Activated B cell treated with CpG ODN at 0.5 μM for 24 hours (primary cell): ENCODE measurements at regions of chr7 and their contacts with region 1.

Region 1: DNA sequence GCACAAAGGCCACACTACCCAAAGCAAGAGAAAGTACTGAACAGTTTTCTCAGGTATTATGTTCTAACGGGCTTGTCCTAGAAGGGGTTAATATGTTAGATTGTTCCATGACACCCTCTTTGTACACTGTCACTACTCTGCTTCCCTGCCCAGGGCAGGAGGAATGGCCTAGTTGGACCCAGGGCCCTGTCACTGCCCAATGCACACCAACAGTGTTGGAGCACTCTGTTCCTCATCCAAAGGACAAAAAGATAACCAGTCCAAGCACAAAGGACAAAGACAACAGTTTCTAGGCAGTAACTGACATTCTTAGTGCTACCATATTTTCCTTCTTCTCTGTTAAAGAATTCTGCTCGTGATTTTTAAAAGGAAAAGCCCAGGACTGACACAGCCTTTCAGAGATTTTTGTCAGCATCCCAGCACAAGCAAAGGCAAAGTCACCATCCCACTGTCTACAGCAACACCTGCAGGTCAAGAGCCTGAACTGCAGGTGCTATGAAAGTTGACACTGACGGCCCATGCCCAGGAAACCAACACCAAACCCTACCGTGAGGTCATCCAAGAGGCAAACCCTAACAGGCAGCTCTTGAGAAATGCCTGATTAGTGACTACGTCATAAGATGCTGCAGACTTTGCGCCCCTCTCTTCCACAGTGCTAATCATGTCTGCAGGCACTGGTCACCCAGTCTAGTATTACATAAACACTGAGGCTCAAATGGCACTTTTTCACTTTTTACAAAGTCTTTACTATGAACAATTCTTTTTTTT is 13.2 kb downstream of the NUDCD3 start:
- DNase-seq: peak; percentile 37
- ATAC-seq: peak; percentile 98
- H3K4me3 Mint-ChIP-seq: no peak overlapping the region
- H3K27ac Mint-ChIP-seq: no peak overlapping the region
- H3K4me1 Mint-ChIP-seq: peaks cover 11% of the 10 kb centered on the region
- H3K27me3 Mint-ChIP-seq: no peaks in the 10 kb centered on the region
- CTCF ChIP-seq: peak; percentile 71

Region 2: DNA sequence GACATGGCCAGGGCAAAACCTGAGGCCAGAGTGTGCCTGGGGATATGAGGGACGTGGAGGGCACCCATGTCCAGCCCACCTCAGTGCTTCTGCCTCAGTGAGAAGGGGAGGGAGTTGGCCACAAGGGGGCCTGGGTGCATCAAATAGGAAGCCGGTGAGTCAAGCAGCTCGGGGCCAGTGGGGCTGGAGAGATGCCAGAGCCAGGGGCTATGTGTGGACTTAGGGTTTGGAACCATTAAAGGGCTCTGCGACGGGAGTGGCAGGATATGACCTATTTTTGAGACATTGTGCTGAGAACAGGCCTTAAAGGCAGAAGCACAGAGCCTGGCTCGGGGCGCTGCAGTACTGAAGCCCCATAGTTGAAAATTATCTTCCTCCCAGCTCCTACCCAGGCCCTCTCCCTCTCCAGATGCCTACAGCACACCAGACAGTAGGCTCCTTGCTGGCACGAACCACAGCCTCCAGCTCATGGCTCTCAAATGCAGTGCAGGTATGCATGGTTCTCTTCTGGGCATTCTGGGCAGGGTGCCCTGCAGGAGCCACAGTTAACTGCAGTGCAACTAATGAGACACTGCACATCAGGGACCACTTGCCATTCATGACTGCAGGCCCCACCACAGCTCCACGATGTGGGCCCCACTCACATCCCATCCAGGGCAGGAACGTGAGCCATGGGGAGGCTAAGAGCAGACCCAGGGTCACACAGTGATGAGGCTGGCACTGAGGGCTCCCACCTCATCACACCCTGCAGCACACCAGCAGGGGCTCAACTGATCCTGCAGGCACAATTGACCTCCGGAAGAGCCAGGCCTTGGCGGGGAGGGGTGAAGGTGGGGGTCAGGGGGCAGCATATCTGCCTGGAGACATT is 404.6 kb before region 1 on chr7:
- CTCF ChIA-PET with region 1: no interaction called
- POLR2A ChIA-PET with region 1: no interaction called
- intact Hi-C with region 1: loop called (anchors 2 kb)
- DNase-seq: no peak
- ATAC-seq: peak; percentile 22
- H3K4me3 Mint-ChIP-seq: no peak overlapping the region
- H3K27ac Mint-ChIP-seq: peak overlapping the region; percentile 90
- H3K4me1 Mint-ChIP-seq: peaks cover 84% of the 10 kb centered on the region
- H3K27me3 Mint-ChIP-seq: no peaks in the 10 kb centered on the region
- CTCF ChIP-seq: no peak

Region 3: GRCh38 chr7:44213877-44214388 is 263.3 kb before region 1 on chr7:
- CTCF ChIA-PET with region 1: no interaction called
- POLR2A ChIA-PET with region 1: no interaction called
- intact Hi-C with region 1: loop called (anchors 1 kb)
- DNase-seq: no peak
- ATAC-seq: peak; percentile 66
- H3K4me3 Mint-ChIP-seq: no peak overlapping the region
- H3K27ac Mint-ChIP-seq: peak overlapping the region; percentile 19
- H3K4me1 Mint-ChIP-seq: peaks cover 10% of the 10 kb centered on the region
- H3K27me3 Mint-ChIP-seq: no peaks in the 10 kb centered on the region
- CTCF ChIP-seq: no peak

Region 4: DNA sequence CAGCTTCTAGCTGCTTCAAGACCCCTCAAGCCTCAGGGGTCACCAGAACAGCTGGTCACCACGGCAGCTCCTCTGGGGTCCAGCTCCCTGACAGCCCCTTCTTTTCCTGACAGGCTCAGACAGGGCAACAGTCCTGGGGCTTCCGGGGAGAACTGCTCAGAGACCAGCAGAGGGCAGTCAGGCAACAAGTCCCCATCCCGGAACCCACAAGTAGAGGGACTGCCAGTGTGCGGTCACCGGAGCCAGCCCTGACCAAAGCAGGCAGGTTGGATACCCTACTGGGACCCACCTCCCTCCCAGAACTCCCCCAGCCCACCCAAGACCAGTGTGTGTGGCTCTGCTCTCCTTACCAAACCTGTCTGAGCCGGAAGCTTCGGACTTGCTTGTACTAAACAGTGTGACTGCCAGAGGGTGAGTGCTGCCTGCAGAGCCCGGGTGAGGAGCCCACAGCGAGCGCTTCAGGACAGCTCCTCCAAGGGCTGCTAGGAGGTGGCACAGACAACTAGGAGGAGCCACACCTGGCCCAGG is 236.2 kb before region 1 on chr7:
- CTCF ChIA-PET with region 1: interaction called, 7 read pairs
- POLR2A ChIA-PET with region 1: no interaction called
- intact Hi-C with region 1: loop called (anchors 1 kb)
- DNase-seq: peak; percentile 41
- ATAC-seq: peak; percentile 87
- H3K4me3 Mint-ChIP-seq: peak overlapping the region; percentile 56
- H3K27ac Mint-ChIP-seq: no peak overlapping the region
- H3K4me1 Mint-ChIP-seq: no peaks in the 10 kb centered on the region
- H3K27me3 Mint-ChIP-seq: no peaks in the 10 kb centered on the region
- CTCF ChIP-seq: no peak

Region 5: DNA sequence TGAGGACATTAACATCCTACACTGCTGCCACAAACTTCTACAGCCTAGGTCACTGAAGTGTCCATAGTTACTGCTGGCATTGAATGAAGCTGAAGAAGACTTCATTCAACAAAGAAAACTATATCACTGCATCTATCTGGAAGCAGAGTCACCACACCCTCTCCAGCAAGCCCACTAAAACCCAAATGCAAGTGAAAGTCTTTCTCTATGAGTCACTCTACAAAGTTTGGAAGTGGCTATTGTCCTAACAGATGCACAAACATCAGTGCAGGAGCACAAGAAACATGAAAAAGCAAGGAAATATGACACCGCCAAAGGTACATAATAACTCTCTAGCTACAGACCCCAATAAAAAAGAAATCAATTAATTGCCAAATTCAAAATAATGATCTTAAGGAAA is 108.4 kb before region 1 on chr7:
- CTCF ChIA-PET with region 1: no interaction called
- POLR2A ChIA-PET with region 1: no interaction called
- intact Hi-C with region 1: no loop called
- DNase-seq: no peak
- ATAC-seq: no peak
- H3K4me3 Mint-ChIP-seq: no peak overlapping the region
- H3K27ac Mint-ChIP-seq: no peak overlapping the region
- H3K4me1 Mint-ChIP-seq: no peaks in the 10 kb centered on the region
- H3K27me3 Mint-ChIP-seq: peaks cover 29% of the 10 kb centered on the region
- CTCF ChIP-seq: no peak

Region 6: GRCh38 chr7:44431091-44431608 is 46.1 kb before region 1 on chr7:
- CTCF ChIA-PET with region 1: no interaction called
- POLR2A ChIA-PET with region 1: no interaction called
- intact Hi-C with region 1: loop called (anchors 1 kb)
- DNase-seq: no peak
- ATAC-seq: peak; percentile 45
- H3K4me3 Mint-ChIP-seq: no peak overlapping the region
- H3K27ac Mint-ChIP-seq: no peak overlapping the region
- H3K4me1 Mint-ChIP-seq: peaks cover 42% of the 10 kb centered on the region
- H3K27me3 Mint-ChIP-seq: no peaks in the 10 kb centered on the region
- CTCF ChIP-seq: no peak

Region 7: DNA sequence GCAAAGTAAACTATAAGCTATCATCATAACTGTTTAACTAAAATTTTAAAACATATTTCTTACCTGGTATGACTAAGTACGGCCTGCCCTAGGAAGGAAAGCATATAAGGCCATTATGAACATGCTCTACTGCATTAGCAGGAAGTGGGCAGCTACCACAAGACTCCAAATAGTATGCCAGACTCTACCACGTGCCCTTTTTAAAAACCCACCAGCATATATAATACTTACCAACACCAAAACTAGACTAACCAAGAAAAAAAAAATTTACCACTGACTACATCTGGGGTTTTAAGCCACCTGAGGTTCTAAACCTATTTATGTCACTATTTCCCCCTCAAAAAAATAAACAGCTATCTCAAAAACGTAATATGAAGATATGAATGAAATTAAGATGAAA is 16.9 kb before region 1 on chr7:
- CTCF ChIA-PET with region 1: no interaction called
- POLR2A ChIA-PET with region 1: no interaction called
- intact Hi-C with region 1: no loop called
- DNase-seq: no peak
- ATAC-seq: peak; percentile 99
- H3K4me3 Mint-ChIP-seq: peak overlapping the region; percentile 59
- H3K27ac Mint-ChIP-seq: peak overlapping the region; percentile 13
- H3K4me1 Mint-ChIP-seq: peaks cover 48% of the 10 kb centered on the region
- H3K27me3 Mint-ChIP-seq: no peaks in the 10 kb centered on the region
- CTCF ChIP-seq: no peak